ENCODE measurements at regions of chr7 and their contacts with region 1.

Region 1: GRCh38 chr7:98745722-98746318 is 124.0 kb downstream of the TMEM130 start:
- DNase-seq: peak; percentile 17
- ATAC-seq: peak; percentile 66; the same call in 1 of the 2 replicates
- H3K4me3 ChIP-seq: no peak overlapping the region
- H3K27ac ChIP-seq: no peak overlapping the region
- H3K4me1 ChIP-seq: no peaks in the 10 kb centered on the region
- H3K27me3 ChIP-seq: no peaks in the 10 kb centered on the region
- CTCF ChIP-seq: peak; percentile 49
- POLR2A ChIP-seq: no peak
- RAD21 ChIP-seq: peak; percentile 36

Region 2: GRCh38 chr7:98315341-98315983 is 430.4 kb before region 1 on chr7:
- CTCF ChIA-PET with region 1: no interaction called
- POLR2A ChIA-PET with region 1: no interaction called
- dilution Hi-C with region 1: no loop called
- in situ Hi-C with region 1: loop called (anchors 25 kb)
- intact Hi-C with region 1: no loop called
- DNase-seq: no peak
- ATAC-seq: no peak
- H3K4me3 ChIP-seq: no peak overlapping the region
- H3K27ac ChIP-seq: no peak overlapping the region
- H3K4me1 ChIP-seq: peaks cover 2% of the 10 kb centered on the region; the same call in 1 of the 2 replicates
- H3K27me3 ChIP-seq: no peaks in the 10 kb centered on the region
- CTCF ChIP-seq: no peak
- POLR2A ChIP-seq: no peak
- RAD21 ChIP-seq: no peak

Region 3: GRCh38 chr7:98434095-98434494 is 311.7 kb before region 1 on chr7:
- CTCF ChIA-PET with region 1: no interaction called
- POLR2A ChIA-PET with region 1: no interaction called
- dilution Hi-C with region 1: no loop called
- in situ Hi-C with region 1: no loop called
- intact Hi-C with region 1: loop called (anchors 5 kb)
- DNase-seq: no peak
- ATAC-seq: no peak
- H3K4me3 ChIP-seq: no peak overlapping the region
- H3K27ac ChIP-seq: no peak overlapping the region
- H3K4me1 ChIP-seq: no peaks in the 10 kb centered on the region
- H3K27me3 ChIP-seq: no peaks in the 10 kb centered on the region
- CTCF ChIP-seq: no peak
- POLR2A ChIP-seq: no peak
- RAD21 ChIP-seq: no peak

Region 4: DNA sequence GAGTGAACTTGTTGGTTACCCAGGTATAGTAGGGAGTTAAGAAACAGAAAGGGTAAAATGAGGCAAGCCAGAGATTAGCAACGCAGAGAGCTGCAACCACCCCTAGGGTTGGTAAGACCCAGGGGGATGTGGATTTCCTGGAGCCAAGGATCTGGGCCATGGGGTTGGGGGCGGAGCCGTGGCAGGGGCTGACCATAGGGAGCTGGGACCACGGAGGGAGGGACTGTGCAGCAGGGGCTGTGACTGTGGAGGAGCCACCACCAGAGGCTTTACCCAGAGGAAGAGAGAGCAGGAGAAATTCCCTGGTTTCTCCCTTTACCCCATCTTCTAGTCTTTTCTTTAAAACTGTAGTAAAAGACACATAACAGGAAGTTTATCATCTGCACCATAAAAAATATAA is 286.3 kb before region 1 on chr7:
- CTCF ChIA-PET with region 1: no interaction called
- POLR2A ChIA-PET with region 1: no interaction called
- dilution Hi-C with region 1: no loop called
- in situ Hi-C with region 1: no loop called
- intact Hi-C with region 1: no loop called
- DNase-seq: no peak
- ATAC-seq: no peak
- H3K4me3 ChIP-seq: no peak overlapping the region
- H3K27ac ChIP-seq: no peak overlapping the region
- H3K4me1 ChIP-seq: no peaks in the 10 kb centered on the region
- H3K27me3 ChIP-seq: no peaks in the 10 kb centered on the region; the same call in 1 of the 2 replicates
- CTCF ChIP-seq: no peak
- POLR2A ChIP-seq: no peak
- RAD21 ChIP-seq: no peak

Region 5: DNA sequence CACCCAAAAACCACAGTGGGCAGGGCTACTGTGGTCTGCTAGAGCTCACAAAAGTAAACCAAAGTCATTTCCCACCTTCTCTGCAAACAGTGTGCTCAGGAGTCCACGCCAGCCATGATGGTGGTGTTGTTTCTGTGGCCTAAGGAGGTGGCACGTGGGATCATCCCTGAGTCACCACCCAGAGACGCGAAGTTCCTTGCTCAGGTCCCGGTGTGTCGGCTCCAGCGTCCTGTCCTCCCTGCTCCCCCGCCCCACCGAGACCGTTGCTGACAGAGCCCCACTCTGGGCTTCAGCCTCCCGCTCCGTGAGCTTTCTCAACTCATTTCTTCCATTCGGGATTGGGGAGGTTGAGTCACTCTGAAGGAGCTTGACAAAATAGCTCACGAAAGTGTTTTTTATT is 10.0 kb before region 1 on chr7:
- CTCF ChIA-PET with region 1: interaction called, 11 read pairs
- POLR2A ChIA-PET with region 1: no interaction called
- dilution Hi-C with region 1: no loop called
- in situ Hi-C with region 1: no loop called
- intact Hi-C with region 1: no loop called
- DNase-seq: no peak
- ATAC-seq: no peak
- H3K4me3 ChIP-seq: no peak overlapping the region
- H3K27ac ChIP-seq: no peak overlapping the region
- H3K4me1 ChIP-seq: no peaks in the 10 kb centered on the region
- H3K27me3 ChIP-seq: no peaks in the 10 kb centered on the region
- CTCF ChIP-seq: no peak
- POLR2A ChIP-seq: no peak
- RAD21 ChIP-seq: no peak

Region 6: DNA sequence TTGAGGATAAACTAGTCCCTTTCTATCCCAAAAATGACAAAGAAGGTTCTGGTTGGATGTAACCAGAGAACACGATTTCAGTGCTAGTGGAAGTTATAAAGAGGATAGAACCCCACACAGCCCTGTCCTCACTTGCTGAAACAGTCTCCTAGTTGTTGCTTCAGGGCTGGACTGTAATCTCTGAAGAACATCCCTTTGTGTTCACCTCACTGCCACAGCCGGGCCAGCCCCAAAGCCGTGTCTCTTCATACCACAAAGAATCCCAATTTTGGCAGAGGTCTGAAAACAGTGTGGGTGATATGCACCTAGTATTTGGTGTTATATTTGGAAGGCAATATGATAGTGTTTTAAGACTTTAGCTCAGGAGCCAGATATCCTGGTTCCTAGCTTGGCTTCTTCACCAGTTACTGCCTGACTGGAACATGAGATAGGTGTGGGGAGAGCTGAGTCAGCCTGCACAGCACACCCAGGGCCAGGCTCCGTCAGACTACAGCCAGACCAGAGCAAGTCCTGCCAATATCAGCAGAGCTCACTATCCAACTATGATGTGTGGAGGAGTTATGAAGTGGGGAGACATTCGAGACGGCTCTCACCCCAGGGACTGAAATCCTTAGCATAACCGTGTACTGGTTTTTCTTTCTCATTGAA is 1017.0 kb after region 1 on chr7:
- CTCF ChIA-PET with region 1: no interaction called
- POLR2A ChIA-PET with region 1: no interaction called
- dilution Hi-C with region 1: no loop called
- in situ Hi-C with region 1: no loop called
- intact Hi-C with region 1: no loop called
- DNase-seq: peak; percentile 70
- ATAC-seq: peak; percentile 90
- H3K4me3 ChIP-seq: no peak overlapping the region
- H3K27ac ChIP-seq: no peak overlapping the region
- H3K4me1 ChIP-seq: no peaks in the 10 kb centered on the region
- H3K27me3 ChIP-seq: peaks cover 3% of the 10 kb centered on the region; the same call in 1 of the 2 replicates
- CTCF ChIP-seq: no peak
- POLR2A ChIP-seq: no peak
- RAD21 ChIP-seq: no peak

Measured in IMR-90 (cell line).